OCI-LY7 (cell line): ENCODE measurements at regions of chr1 and their contacts with region 1.

Region 1: GRCh38 chr1:178664278-178664677 is 60.8 kb upstream of the RALGPS2 start:
- DNase-seq: peak; percentile 85
- H3K4me3 ChIP-seq: peak overlapping the region; percentile 15
- H3K27ac ChIP-seq: peak overlapping the region; percentile 75
- H3K4me1 ChIP-seq: peaks cover 68% of the 10 kb centered on the region
- CTCF ChIP-seq: no peak

Region 2: DNA sequence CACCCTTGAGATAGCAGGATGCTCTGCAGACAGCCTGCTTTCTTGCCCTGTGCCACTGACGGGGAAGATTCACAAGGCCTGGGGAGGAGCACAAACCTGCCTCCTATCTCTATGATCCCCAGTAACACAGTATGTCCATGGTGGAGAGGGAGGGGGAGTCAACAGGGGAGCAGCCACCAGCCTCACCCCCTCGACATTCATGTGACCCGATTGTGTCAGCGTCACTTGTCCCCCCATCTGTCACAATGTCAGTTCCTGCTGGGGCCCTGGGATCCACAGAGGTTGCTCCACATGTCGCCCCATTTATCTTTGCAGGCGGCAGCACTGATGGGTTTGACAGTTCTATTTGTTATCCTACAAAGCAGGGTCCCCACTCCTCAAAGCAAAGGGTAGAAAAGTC is 825.4 kb before region 1 on chr1:
- CTCF ChIA-PET with region 1: no interaction called
- POLR2A ChIA-PET with region 1: no interaction called
- intact Hi-C with region 1: no loop called
- DNase-seq: no peak
- H3K4me3 ChIP-seq: no peak overlapping the region
- H3K27ac ChIP-seq: no peak overlapping the region
- H3K4me1 ChIP-seq: no peaks in the 10 kb centered on the region
- CTCF ChIP-seq: no peak

Region 3: GRCh38 chr1:178575611-178576331 is 88.5 kb before region 1 on chr1:
- CTCF ChIA-PET with region 1: no interaction called
- POLR2A ChIA-PET with region 1: interaction called, 11 read pairs
- intact Hi-C with region 1: no loop called
- DNase-seq: peak; percentile 83
- H3K4me3 ChIP-seq: peak overlapping the region; percentile 67
- H3K27ac ChIP-seq: peak overlapping the region; percentile 99
- H3K4me1 ChIP-seq: peaks cover 91% of the 10 kb centered on the region
- CTCF ChIP-seq: no peak

Region 4: DNA sequence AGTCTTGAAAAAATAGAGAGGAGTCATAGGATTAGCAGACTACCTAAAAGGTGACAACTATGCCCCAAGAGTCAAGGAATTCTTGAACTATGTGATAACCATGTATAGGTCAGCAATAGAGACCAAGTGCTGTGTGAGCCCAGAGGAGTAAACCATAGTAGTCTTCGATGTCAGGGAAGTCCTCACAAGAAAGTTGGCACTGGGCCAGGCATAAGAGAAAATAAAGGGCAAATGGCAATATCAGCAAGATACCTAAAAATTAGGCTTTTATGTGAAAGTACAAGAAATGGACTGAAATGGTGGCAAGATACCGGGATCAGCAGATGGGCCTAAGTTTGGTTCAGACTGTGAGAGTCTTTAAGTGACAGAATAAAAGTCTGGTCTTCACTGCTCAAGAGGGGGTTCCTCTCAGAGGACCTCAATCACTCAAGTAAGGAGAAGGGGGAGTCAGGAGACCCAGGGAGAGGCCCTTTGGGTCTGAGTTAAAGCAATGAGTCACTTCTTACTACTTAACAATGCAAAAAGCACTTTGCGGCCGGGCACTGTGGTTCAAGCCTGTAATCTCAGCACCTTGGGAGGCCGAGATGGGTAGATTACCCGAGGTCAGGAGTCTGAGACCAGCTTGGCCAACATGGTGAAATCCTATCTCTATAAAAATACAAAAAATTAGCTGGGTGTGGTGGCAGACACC is 56.4 kb before region 1 on chr1:
- CTCF ChIA-PET with region 1: no interaction called
- POLR2A ChIA-PET with region 1: interaction called, 16 read pairs
- intact Hi-C with region 1: loop called (anchors 1 kb)
- DNase-seq: peak; percentile 45
- H3K4me3 ChIP-seq: no peak overlapping the region
- H3K27ac ChIP-seq: peak overlapping the region; percentile 98
- H3K4me1 ChIP-seq: peaks cover 74% of the 10 kb centered on the region
- CTCF ChIP-seq: no peak

Region 5: GRCh38 chr1:178644308-178645120 is 19.8 kb before region 1 on chr1:
- CTCF ChIA-PET with region 1: interaction called, 3 read pairs
- POLR2A ChIA-PET with region 1: interaction called, 14 read pairs
- intact Hi-C with region 1: no loop called
- DNase-seq: peak; percentile 51
- H3K4me3 ChIP-seq: no peak overlapping the region
- H3K27ac ChIP-seq: no peak overlapping the region
- H3K4me1 ChIP-seq: peaks cover 38% of the 10 kb centered on the region
- CTCF ChIP-seq: no peak

Region 6: DNA sequence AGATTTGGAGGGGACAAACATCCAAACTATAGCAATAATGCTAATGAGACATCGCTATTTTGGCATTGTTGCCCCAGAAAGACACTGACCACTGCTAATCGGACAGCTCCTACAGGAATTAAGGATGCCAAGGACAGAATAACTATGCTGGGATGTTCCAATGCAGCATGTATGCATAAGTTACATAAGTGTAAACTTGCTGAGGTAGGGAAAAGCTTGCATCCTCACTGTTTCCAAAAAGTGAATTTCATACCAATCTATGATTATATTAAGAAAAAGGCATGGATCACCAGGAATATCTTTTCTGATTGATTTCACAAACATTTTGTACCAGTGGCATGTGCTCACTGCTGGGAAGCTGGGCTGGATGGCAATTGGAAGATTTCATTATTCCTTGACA is 15.0 kb after region 1 on chr1:
- CTCF ChIA-PET with region 1: interaction called, 3 read pairs
- POLR2A ChIA-PET with region 1: interaction called, 10 read pairs
- intact Hi-C with region 1: no loop called
- DNase-seq: no peak
- H3K4me3 ChIP-seq: no peak overlapping the region
- H3K27ac ChIP-seq: no peak overlapping the region
- H3K4me1 ChIP-seq: peaks cover 7% of the 10 kb centered on the region
- CTCF ChIP-seq: no peak

Region 7: DNA sequence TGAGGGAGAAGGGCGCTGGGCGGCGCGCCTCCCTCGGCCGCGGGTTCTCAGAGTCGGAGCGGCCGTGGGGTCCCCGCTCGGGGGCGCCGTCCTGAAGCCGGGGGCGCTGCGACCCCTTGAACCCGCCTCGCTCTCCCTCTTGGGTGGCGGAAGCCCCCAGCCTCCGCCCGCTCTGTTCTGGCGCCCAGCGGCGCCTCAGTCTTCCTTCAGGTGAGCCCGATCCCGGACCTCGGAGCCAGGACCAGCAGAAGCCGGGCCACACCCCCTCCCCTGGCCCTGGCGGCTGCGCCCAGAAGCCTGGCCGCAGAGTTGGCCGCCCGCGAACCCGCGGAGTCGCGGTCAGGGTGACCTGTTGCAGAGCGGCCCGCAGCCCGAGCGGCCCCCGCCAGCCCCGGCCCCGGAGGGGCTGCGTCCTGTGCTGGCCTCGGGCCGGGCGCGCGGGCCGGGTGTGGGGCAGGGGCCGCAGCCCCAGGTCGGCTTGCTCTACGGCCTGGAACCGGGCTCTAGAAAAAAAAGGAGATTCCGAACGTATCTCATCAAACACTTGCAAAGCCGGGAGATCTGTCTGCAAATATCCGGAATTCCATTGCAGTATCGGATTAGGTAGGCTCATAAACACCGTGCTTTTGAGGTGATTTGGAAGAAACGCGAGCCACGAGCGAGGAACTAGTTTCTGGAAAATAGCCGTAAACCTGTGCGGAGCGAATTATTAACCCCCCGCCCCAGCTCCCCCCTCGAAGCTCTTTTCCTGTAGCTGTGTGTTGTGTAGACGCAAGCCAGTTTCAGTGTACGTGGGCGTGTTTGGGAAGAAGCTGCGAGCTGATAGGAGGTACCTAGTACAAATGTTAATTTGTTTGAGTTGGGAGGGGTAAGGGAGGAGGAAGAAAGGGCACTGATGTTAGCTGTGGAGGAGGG is 61.6 kb after region 1 on chr1:
- CTCF ChIA-PET with region 1: interaction called, 4 read pairs
- POLR2A ChIA-PET with region 1: interaction called, 10 read pairs
- intact Hi-C with region 1: loop called (anchors 2 kb)
- DNase-seq: peak; percentile 95
- H3K4me3 ChIP-seq: peak overlapping the region; percentile 92
- H3K27ac ChIP-seq: peak overlapping the region; percentile 84
- H3K4me1 ChIP-seq: peaks cover 32% of the 10 kb centered on the region
- CTCF ChIP-seq: peak; percentile 58